Adrenal gland (tissue), 19 donors: ENCODE measurements at regions of chr10 and their contacts with region 1.

Region 1: DNA sequence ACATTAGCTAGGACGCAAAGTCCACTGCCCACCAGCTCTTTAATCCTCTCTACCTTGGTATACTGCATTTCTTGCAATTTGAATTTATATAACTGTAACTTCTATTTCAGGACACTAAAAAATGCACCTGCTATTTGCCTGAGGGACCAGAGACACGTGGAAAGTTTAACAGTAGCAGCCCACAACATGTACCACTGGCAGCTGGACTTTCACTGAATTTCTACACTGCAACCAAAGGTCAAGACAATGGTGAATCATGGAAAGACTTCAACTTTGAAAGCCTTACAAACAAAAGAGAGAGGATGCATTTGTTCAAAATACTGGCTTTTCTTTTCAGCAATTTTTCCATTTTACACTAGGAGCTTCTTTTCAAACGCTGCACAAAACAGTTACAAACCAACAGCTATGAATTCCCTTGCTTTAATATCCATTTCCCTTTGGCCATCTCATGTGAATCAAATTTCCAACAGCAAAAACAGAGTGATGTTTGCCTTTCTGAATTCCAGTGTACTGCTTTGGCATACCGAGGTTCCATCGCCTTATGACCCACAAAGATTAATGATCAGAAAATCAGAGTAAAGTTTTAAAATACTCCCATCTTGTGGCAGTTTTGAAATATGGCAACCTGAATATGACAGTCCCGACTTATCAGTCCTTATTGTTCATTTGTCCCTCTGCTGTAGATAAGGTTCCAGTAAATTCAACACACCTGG is 29.9 kb upstream of the HNRNPH3 start:
- DNase-seq: peak in 1 of 7 donors; percentile 20
- H3K4me3 ChIP-seq: no peak overlapping the region
- H3K27ac ChIP-seq: no peak overlapping the region
- H3K4me1 ChIP-seq: peaks cover 0 to 5% of the 10 kb centered on the region in 2 donors
- H3K27me3 ChIP-seq: no peaks in the 10 kb centered on the region
- CTCF ChIP-seq: peak; percentile 43 to 68 (median 59)
- POLR2A ChIP-seq: no peak

Region 2: DNA sequence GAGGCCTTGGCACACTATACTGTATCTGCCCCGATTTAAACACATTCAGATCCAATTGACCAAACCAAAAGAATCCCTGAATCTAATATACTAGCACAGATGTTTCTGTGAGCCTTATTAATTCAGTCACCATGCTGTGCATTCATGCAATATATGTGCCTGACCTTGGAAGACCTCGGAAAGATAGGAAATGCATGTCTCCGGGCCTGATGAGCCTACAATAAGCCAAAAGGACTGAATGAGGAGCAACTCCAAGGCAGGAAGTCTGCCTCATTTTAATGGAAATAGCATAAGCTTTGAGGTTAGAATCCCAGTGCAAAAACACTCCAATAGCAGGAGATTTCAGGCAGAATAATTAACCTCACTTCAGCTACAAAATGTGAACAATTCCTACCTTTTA is 1059.4 kb before region 1 on chr10:
- intact Hi-C with region 1: no loop called
- DNase-seq: no peak
- H3K4me3 ChIP-seq: no peak overlapping the region
- H3K27ac ChIP-seq: no peak overlapping the region
- H3K4me1 ChIP-seq: no peaks in the 10 kb centered on the region
- H3K27me3 ChIP-seq: no peaks in the 10 kb centered on the region
- CTCF ChIP-seq: no peak
- POLR2A ChIP-seq: no peak

Region 3: GRCh38 chr10:67861750-67862460 is 440.0 kb before region 1 on chr10:
- intact Hi-C with region 1: loop called in 1 of 2 experiments (anchors 10 kb)
- DNase-seq: no peak
- H3K4me3 ChIP-seq: no peak overlapping the region
- H3K27ac ChIP-seq: no peak overlapping the region
- H3K4me1 ChIP-seq: no peaks in the 10 kb centered on the region
- H3K27me3 ChIP-seq: no peaks in the 10 kb centered on the region
- CTCF ChIP-seq: no peak
- POLR2A ChIP-seq: no peak

Region 4: GRCh38 chr10:68082872-68083271 is 219.1 kb before region 1 on chr10:
- intact Hi-C with region 1: loop called in 1 of 2 experiments (anchors 10 kb)
- DNase-seq: no peak
- H3K4me3 ChIP-seq: no peak overlapping the region
- H3K27ac ChIP-seq: no peak overlapping the region
- H3K4me1 ChIP-seq: no peaks in the 10 kb centered on the region
- H3K27me3 ChIP-seq: no peaks in the 10 kb centered on the region
- CTCF ChIP-seq: peak; percentile 28 to 78 (median 64)
- POLR2A ChIP-seq: no peak

Region 5: DNA sequence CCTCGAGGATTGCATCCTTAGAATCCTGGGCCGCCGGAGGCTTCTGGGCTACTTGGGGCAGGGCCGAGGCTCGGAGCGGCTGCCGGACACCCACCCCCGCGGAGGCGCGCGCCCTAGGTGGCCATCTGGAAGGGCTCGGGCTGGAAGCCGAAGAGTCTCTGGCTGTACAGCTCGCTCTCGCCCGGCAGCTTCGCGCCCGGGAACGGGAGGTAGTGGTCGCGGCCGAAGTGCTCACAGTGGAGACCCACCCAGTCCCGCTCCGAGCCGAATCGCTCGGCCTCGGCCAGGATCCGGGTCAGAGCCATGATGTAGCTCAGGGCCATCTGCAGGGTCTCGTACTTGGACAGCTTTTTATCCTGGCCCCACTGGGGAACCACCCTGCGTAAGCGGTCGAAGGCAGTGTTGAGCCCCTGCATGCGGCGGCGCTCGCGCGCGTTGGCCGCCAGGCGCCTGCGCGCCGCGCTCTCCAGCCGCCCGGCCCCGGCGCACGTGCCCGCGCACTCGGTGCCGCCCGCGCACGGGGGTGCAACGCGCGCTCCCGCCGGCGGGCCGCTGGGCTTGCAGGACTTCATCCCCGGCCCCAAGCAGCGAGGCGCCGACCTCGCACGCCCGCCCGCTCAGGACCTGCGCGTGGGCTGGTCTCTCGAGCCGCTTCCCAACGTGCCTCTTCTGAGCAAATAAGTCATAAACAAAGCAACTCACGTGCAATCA is 70.7 kb before region 1 on chr10:
- intact Hi-C with region 1: loop called in 1 of 2 experiments (anchors 10 kb)
- DNase-seq: peak; percentile 40 to 60 (median 47)
- H3K4me3 ChIP-seq: peak overlapping the region in 3 of 4 donors; percentile 15 to 77 (median 46)
- H3K27ac ChIP-seq: peak overlapping the region in 2 of 5 donors; percentile 45 to 49
- H3K4me1 ChIP-seq: peaks cover 10 to 11% of the 10 kb centered on the region in 2 donors
- H3K27me3 ChIP-seq: no peaks in the 10 kb centered on the region
- CTCF ChIP-seq: peak in 2 of 6 experiments; percentile 6 to 46
- POLR2A ChIP-seq: no peak

Region 6: DNA sequence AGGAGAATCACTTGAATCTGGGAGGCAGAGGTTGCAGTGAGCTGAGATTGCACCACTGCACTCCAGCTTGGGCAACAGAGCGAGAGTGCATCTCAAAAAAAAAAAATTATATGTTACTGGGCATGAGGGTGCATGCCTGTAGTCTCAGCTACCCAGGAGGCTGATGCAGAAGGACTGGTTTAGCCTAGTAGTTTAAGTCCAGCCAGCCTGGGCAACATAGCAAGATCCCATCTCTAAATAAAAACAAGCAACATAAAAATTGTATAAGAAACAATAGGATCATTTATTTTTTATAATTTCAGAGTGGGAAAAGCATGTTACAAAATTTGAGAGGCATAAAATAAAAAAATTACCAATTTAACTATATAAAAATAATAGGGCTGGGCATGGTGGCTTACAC is 403.6 kb after region 1 on chr10:
- intact Hi-C with region 1: no loop called
- DNase-seq: no peak
- H3K4me3 ChIP-seq: no peak overlapping the region
- H3K27ac ChIP-seq: no peak overlapping the region
- H3K4me1 ChIP-seq: no peaks in the 10 kb centered on the region
- H3K27me3 ChIP-seq: no peaks in the 10 kb centered on the region
- CTCF ChIP-seq: no peak
- POLR2A ChIP-seq: no peak